ENCODE measurements at regions of chr11 and their contacts with region 1.

Region 1: GRCh38 chr11:77127232-77127911 is 674 bp upstream of the MYO7A start:
- DNase-seq: peak; percentile 89
- H3K4me3 Mint-ChIP-seq: peak overlapping the region; percentile 73
- H3K27ac Mint-ChIP-seq: no peak overlapping the region
- H3K4me1 Mint-ChIP-seq: peaks cover 7% of the 10 kb centered on the region
- H3K27me3 Mint-ChIP-seq: peaks cover 5% of the 10 kb centered on the region

Region 2: GRCh38 chr11:77073328-77074001 is 53.9 kb before region 1 on chr11:
- intact Hi-C with region 1: no loop called
- DNase-seq: no peak
- H3K4me3 Mint-ChIP-seq: no peak overlapping the region
- H3K27ac Mint-ChIP-seq: no peak overlapping the region
- H3K4me1 Mint-ChIP-seq: peaks cover 18% of the 10 kb centered on the region
- H3K27me3 Mint-ChIP-seq: peaks cover 15% of the 10 kb centered on the region

Region 3: DNA sequence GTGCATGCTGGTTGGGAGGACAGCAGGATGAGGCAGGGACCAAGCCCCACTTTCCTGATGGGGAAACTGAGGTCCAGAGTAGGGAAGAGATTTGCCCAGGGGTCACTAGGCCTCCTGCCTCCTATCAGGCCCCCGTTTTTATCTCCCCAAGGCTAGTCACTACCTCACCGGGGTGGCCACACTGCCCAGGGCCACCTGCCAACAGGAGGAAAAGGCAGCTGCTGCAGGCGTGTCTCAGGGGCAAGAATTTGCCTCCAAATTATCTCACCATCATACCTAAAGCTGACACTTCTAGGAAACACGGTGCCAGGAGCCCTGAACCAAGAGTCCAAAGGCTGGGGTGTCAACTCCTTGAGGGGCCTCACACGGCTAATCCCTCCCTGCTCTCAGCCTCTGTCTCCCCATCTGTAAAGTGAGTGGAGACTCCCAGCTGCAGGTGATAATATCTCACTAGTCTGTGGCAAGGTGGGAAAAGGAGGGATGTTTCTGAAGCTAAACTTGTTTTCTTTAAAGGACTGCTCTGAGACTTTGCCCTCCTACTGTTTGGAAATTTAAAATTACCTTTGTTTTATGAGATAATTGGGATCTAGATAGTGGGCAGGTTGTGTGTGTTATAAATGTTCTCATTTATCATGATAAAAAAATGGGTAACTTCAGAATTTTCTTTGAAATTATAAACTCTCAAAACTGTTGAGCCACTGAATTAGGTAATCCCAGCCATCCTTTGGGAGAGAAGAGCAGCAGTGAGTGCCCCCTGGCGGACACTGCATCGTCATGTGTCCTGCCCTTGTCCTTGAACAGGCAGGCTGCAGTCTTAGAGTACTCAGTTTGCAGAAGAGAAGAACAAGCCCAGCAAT is 60.6 kb after region 1 on chr11:
- intact Hi-C with region 1: loop called (anchors 1 kb)
- DNase-seq: peak; percentile 90
- H3K4me3 Mint-ChIP-seq: no peak overlapping the region
- H3K27ac Mint-ChIP-seq: no peak overlapping the region
- H3K4me1 Mint-ChIP-seq: no peaks in the 10 kb centered on the region
- H3K27me3 Mint-ChIP-seq: no peaks in the 10 kb centered on the region